Common myeloid progenitor, CD34-positive (primary cell): ENCODE measurements at regions of chr2 and their contacts with region 1.

Region 1: DNA sequence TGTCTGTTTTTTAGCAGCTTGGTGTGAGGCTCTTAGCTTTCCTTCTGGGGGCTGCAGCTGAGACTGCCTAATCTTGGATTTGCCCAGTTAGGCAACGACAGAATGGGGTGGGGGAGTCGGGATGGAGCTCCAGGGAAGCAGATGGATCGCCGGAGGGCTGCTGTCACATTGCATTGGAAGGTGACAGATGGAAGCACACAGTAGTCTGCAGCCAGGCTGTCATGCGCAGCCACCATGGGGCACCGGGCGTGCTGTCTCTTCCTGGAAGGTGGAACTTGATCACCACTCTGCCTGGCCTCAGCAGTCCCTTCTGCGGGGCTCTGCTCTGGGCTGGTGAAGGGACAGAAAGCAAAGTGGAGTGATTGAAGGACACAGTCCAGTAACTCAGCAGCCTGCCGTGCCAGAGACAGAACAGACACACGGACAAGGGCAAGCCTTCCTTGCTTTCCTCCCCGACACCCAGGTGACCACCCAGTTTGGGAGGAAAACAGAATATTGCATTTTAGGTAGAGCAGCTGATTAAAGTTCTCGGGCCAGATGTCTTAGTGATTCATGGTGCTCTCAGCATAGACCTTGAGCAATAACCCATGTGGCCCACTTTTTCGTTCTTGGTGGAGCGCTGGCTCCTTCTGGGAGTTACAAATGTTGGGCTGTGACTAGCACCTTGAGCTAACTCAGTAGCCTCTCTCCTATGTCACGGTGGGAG is 40.9 kb downstream of the RNF144A start:
- DNase-seq: no peak
- H3K4me3 ChIP-seq: no peak overlapping the region
- H3K27ac ChIP-seq: no peak overlapping the region
- H3K4me1 ChIP-seq: peaks cover 0 to 8% (median 5%) of the 10 kb centered on the region in 4 experiments
- H3K27me3 ChIP-seq: no peaks in the 10 kb centered on the region

Region 2: DNA sequence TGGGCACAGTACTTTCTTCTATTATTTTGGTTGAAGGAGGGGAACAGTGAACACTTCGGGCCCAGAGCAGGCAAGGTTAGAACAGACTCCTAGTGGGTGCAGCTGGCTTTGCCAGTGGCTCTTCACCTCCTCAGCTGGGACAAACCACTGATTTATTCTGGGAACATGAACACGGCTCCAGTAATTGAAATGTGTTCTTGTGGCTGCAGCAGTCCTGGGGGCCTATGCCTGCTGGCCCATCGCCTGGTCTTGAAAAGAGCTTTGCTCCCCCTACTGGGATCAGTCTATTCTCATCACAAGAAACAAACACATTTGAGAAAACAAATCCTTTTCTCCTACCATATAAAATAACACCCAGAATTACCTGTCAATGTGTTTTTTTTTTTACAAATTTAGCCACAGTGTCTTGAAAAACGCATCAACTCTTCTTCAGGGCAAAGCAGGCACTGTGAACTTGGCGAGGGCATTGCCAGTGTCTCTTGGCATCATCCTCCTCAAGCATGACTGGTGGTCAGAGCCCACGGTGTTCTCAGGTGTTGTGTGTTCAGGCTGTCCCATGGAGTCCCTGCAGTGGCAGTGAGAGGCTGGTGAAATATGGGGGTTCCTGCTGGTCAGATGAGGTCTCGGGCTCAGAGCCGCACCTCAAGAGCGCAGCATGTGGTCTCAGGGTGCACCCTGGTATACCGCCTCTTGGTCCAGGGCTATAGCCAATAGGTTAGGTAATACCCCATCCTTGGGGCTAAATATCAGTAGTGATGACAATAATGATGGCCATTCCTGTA is 10.4 kb after region 1 on chr2:
- CTCF ChIA-PET with region 1: interaction called, 10 read pairs
- POLR2A ChIA-PET with region 1: no interaction called
- DNase-seq: peak; percentile 33 to 55 (median 53)
- H3K4me3 ChIP-seq: no peak overlapping the region
- H3K27ac ChIP-seq: no peak overlapping the region
- H3K4me1 ChIP-seq: peaks cover 0 to 27% (median 7%) of the 10 kb centered on the region in 4 experiments
- H3K27me3 ChIP-seq: no peaks in the 10 kb centered on the region